Activated B cell treated with CpG ODN at 0.5 μM for 24 hours (primary cell): ENCODE measurements at regions of chr2 and their contacts with region 1.

Region 1: GRCh38 chr2:184598316-184599053 is at the start of gene ZNF804A:
- DNase-seq: peak; percentile 59
- ATAC-seq: peak; percentile 87
- H3K4me3 Mint-ChIP-seq: peak within 1 kb of the TSS; percentile 78
- H3K27ac Mint-ChIP-seq: peak within 1 kb of the TSS; percentile 80
- H3K4me1 Mint-ChIP-seq: peaks cover 30% of the 10 kb centered on the region
- H3K27me3 Mint-ChIP-seq: peaks cover 14% of the 10 kb centered on the region
- CTCF ChIP-seq: no peak
- total RNA-seq, gene ZNF804A: 1.8 and 2.3 TPM in 2 replicates

Region 2: DNA sequence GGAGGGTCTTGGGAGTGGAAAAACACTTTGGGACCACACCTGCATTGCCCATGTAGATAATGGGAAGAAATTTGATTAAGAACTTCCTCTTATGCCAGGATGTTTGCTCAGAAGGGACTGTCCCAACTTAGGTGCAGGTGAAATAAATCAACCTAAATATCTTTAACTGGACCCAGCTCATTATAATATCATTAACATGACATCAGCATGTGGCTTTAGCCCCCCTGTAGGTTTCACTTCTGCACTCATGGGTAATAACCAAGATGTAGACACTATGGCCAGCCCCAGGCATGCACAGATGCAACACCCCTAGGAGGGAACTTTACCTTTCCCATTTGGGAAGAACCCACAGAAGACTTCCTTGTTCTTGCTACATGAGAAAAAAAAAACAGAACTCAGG is 227.5 kb before region 1 on chr2:
- CTCF ChIA-PET with region 1: no interaction called
- POLR2A ChIA-PET with region 1: interaction called, 3 read pairs
- intact Hi-C with region 1: loop called (anchors 5 kb)
- DNase-seq: no peak
- ATAC-seq: peak; percentile 83
- H3K4me3 Mint-ChIP-seq: no peak overlapping the region
- H3K27ac Mint-ChIP-seq: peak overlapping the region; percentile 71
- H3K4me1 Mint-ChIP-seq: peaks cover 14% of the 10 kb centered on the region
- H3K27me3 Mint-ChIP-seq: no peaks in the 10 kb centered on the region
- CTCF ChIP-seq: no peak

Region 3: GRCh38 chr2:184481865-184482264 is 116.6 kb before region 1 on chr2:
- CTCF ChIA-PET with region 1: no interaction called
- POLR2A ChIA-PET with region 1: no interaction called
- intact Hi-C with region 1: no loop called
- DNase-seq: no peak
- ATAC-seq: no peak
- H3K4me3 Mint-ChIP-seq: no peak overlapping the region
- H3K27ac Mint-ChIP-seq: no peak overlapping the region
- H3K4me1 Mint-ChIP-seq: no peaks in the 10 kb centered on the region
- H3K27me3 Mint-ChIP-seq: no peaks in the 10 kb centered on the region
- CTCF ChIP-seq: no peak

Region 4: GRCh38 chr2:184581391-184581790 is 17.1 kb before region 1 on chr2:
- CTCF ChIA-PET with region 1: no interaction called
- POLR2A ChIA-PET with region 1: no interaction called
- intact Hi-C with region 1: no loop called
- DNase-seq: no peak
- ATAC-seq: no peak
- H3K4me3 Mint-ChIP-seq: no peak overlapping the region
- H3K27ac Mint-ChIP-seq: no peak overlapping the region
- H3K4me1 Mint-ChIP-seq: no peaks in the 10 kb centered on the region
- H3K27me3 Mint-ChIP-seq: no peaks in the 10 kb centered on the region
- CTCF ChIP-seq: no peak

Region 5: GRCh38 chr2:184620367-184620766 is 21.9 kb after region 1 on chr2:
- CTCF ChIA-PET with region 1: no interaction called
- POLR2A ChIA-PET with region 1: no interaction called
- intact Hi-C with region 1: no loop called
- DNase-seq: no peak
- ATAC-seq: no peak
- H3K4me3 Mint-ChIP-seq: no peak overlapping the region
- H3K27ac Mint-ChIP-seq: no peak overlapping the region
- H3K4me1 Mint-ChIP-seq: no peaks in the 10 kb centered on the region
- H3K27me3 Mint-ChIP-seq: no peaks in the 10 kb centered on the region
- CTCF ChIP-seq: no peak

Region 6: DNA sequence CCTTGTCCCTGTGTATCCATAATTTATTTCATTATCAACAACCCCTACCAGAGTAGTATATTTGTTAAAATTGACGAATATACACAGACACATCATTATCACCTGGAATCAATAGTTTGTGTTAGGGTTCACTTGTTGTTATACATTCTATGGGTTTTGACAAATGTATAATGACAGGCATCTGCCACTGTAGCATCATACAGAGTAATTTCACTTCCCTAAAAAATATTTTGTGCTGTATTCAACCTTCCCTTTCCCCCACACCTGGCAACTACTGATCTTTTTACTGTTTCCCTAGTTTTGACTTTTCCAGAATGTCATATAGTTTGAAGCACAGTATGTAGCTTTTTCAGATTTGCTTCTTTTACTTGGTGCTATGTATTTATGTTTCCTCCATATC is 131.8 kb after region 1 on chr2:
- CTCF ChIA-PET with region 1: no interaction called
- POLR2A ChIA-PET with region 1: no interaction called
- intact Hi-C with region 1: loop called (anchors 2 kb)
- DNase-seq: no peak
- ATAC-seq: peak; percentile 71
- H3K4me3 Mint-ChIP-seq: no peak overlapping the region
- H3K27ac Mint-ChIP-seq: no peak overlapping the region
- H3K4me1 Mint-ChIP-seq: peaks cover 21% of the 10 kb centered on the region
- H3K27me3 Mint-ChIP-seq: no peaks in the 10 kb centered on the region
- CTCF ChIP-seq: no peak

Region 7: GRCh38 chr2:186480991-186481390 is 1882.5 kb after region 1 on chr2:
- CTCF ChIA-PET with region 1: no interaction called
- POLR2A ChIA-PET with region 1: interaction called, 3 read pairs
- intact Hi-C with region 1: loop called (anchors 2 kb)
- DNase-seq: no peak
- ATAC-seq: no peak
- H3K4me3 Mint-ChIP-seq: no peak overlapping the region
- H3K27ac Mint-ChIP-seq: no peak overlapping the region
- H3K4me1 Mint-ChIP-seq: peaks cover 22% of the 10 kb centered on the region
- H3K27me3 Mint-ChIP-seq: no peaks in the 10 kb centered on the region
- CTCF ChIP-seq: no peak

Region 8: GRCh38 chr2:186485871-186486650 is 1887.6 kb after region 1 on chr2 and contains the start of gene ZC3H15:
- CTCF ChIA-PET with region 1: no interaction called
- POLR2A ChIA-PET with region 1: interaction called, 3 read pairs
- intact Hi-C with region 1: loop called (anchors 2 kb)
- DNase-seq: peak; percentile 93
- ATAC-seq: peak; percentile 90
- H3K4me3 Mint-ChIP-seq: peak within 1 kb of the TSS; percentile 98
- H3K27ac Mint-ChIP-seq: peak within 1 kb of the TSS; percentile 99
- H3K4me1 Mint-ChIP-seq: peaks cover 67% of the 10 kb centered on the region
- H3K27me3 Mint-ChIP-seq: no peaks in the 10 kb centered on the region
- CTCF ChIP-seq: no peak
- total RNA-seq, gene ZC3H15: 66.4 and 73.4 TPM in 2 replicates